ENCODE measurements at regions of chr12 and their contacts with region 1.

Region 1: GRCh38 chr12:9813821-9814809 is 13.2 kb upstream of the KLRF1 start:
- DNase-seq: peak; percentile 93
- H3K4me3 Mint-ChIP-seq: peak overlapping the region; percentile 81
- H3K27ac Mint-ChIP-seq: peak overlapping the region; percentile 77
- H3K4me1 Mint-ChIP-seq: peaks cover 26% of the 10 kb centered on the region
- H3K27me3 Mint-ChIP-seq: peaks cover 34% of the 10 kb centered on the region

Region 2: GRCh38 chr12:9702255-9702654 is 111.9 kb before region 1 on chr12:
- CTCF ChIA-PET with region 1: no interaction called
- DNase-seq: peak; percentile 78
- H3K4me3 Mint-ChIP-seq: peak overlapping the region; percentile 56
- H3K27ac Mint-ChIP-seq: peak overlapping the region; percentile 92
- H3K4me1 Mint-ChIP-seq: peaks cover 83% of the 10 kb centered on the region
- H3K27me3 Mint-ChIP-seq: no peaks in the 10 kb centered on the region

Region 3: DNA sequence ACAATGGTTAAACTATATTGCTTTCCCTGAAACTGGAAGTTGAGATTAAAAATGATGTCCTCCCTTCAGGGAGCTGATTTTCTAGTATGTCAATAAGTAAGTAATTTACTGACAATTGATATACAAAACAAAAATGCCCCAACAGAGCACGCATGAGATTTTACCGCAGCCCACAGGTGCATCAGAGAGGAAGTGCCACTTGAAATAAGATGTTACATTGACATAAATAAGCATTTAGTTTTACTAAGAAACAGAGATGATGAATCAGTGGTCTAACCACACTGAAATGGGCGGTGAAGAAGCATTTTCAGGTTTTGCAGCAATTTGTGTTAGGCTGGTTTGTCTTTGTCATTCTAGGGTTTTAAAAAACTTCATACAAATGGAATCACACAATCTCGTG is 72.4 kb before region 1 on chr12:
- CTCF ChIA-PET with region 1: interaction called, 16 read pairs
- DNase-seq: peak; percentile 89
- H3K4me3 Mint-ChIP-seq: peak overlapping the region; percentile 88
- H3K27ac Mint-ChIP-seq: peak overlapping the region; percentile 100
- H3K4me1 Mint-ChIP-seq: peaks cover 75% of the 10 kb centered on the region
- H3K27me3 Mint-ChIP-seq: peaks cover 4% of the 10 kb centered on the region

Region 4: GRCh38 chr12:9786726-9787717 is 27.1 kb before region 1 on chr12:
- CTCF ChIA-PET with region 1: no interaction called
- DNase-seq: no peak
- H3K4me3 Mint-ChIP-seq: no peak overlapping the region
- H3K27ac Mint-ChIP-seq: no peak overlapping the region
- H3K4me1 Mint-ChIP-seq: peaks cover 49% of the 10 kb centered on the region
- H3K27me3 Mint-ChIP-seq: no peaks in the 10 kb centered on the region

Region 5: GRCh38 chr12:9797722-9798619 is 16.1 kb before region 1 on chr12:
- CTCF ChIA-PET with region 1: interaction called, 31 read pairs
- DNase-seq: peak; percentile 81
- H3K4me3 Mint-ChIP-seq: peak overlapping the region; percentile 74
- H3K27ac Mint-ChIP-seq: peak overlapping the region; percentile 95
- H3K4me1 Mint-ChIP-seq: peaks cover 45% of the 10 kb centered on the region
- H3K27me3 Mint-ChIP-seq: peaks cover 4% of the 10 kb centered on the region

Region 6: DNA sequence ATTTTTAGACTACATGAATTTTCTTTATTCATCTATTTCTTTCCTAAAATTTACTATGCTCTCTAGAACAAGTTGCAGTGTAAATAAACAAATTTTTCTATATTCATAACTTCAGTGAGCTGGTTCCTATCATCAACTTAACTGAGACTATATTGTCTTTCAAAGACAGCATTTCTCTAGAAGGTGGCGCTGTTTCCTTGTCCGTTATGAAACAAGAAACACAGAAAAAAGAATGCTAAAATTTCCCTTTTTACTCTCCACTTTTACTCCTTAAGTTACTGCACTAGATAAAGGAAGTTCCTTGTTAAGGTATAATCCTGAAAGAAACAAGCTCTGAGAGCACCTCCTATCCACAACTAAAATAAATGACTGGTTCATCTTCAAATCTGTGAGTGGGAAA is 126.3 kb after region 1 on chr12:
- CTCF ChIA-PET with region 1: interaction called, 12 read pairs
- DNase-seq: no peak
- H3K4me3 Mint-ChIP-seq: no peak overlapping the region
- H3K27ac Mint-ChIP-seq: no peak overlapping the region
- H3K4me1 Mint-ChIP-seq: peaks cover 26% of the 10 kb centered on the region
- H3K27me3 Mint-ChIP-seq: peaks cover 11% of the 10 kb centered on the region

Region 7: GRCh38 chr12:10140001-10140400 is 325.9 kb after region 1 on chr12:
- CTCF ChIA-PET with region 1: interaction called, 17 read pairs
- DNase-seq: peak; percentile 68
- H3K4me3 Mint-ChIP-seq: no peak overlapping the region
- H3K27ac Mint-ChIP-seq: no peak overlapping the region
- H3K4me1 Mint-ChIP-seq: no peaks in the 10 kb centered on the region
- H3K27me3 Mint-ChIP-seq: peaks cover 27% of the 10 kb centered on the region

Measured in activated naive CD4-positive, alpha-beta T cell treated with anti-CD3 and anti-CD28 coated beads, Interleukin-2, amount 10 ng/mL, durations not matched to agents 7 days and 5 days (primary cell).